Prostate gland (tissue), 2 donors: ENCODE measurements at regions of chr11 and their contacts with region 1.

Region 1: DNA sequence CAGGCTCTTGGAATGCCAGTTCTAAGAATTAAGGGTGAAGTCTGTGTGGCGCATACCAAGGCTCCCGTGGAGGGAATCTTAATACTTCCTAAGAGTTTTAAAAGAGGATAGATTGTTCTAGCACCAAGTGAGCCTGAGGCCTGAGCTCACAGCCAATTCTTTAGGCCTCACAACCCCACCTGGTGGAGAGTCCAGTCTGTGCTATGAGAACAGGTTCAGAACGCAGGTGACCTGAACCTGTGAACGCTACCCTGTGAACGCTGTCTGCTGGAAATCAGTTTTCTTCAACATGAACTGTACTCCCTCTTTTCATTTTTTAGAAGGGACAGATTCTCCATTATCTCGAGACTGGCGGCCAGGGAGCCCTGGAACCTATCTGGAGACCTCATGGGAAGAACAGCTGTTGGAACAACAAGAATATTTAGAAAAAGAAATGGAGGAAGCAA is 43.2 kb upstream of the DLAT start:
- DNase-seq: peak; percentile 87
- H3K4me3 ChIP-seq: peak overlapping the region; percentile 17 to 28
- H3K27ac ChIP-seq: peak overlapping the region; percentile 84 to 85
- H3K4me1 ChIP-seq: no peaks in the 10 kb centered on the region
- H3K27me3 ChIP-seq: no peaks in the 10 kb centered on the region
- CTCF ChIP-seq: peak; percentile 55 to 93 (median 84)
- POLR2A ChIP-seq: no peak

Region 2: GRCh38 chr11:111911563-111912401 is 70.3 kb before region 1 on chr11 and contains the start of gene CRYAB:
- intact Hi-C with region 1: loop called (anchors 2 kb)
- DNase-seq: peak; percentile 96
- H3K4me3 ChIP-seq: peak within 1 kb of the TSS; percentile 31 to 33
- H3K27ac ChIP-seq: peak within 1 kb of the TSS; percentile 92 to 95
- H3K4me1 ChIP-seq: peaks cover 15% of the 10 kb centered on the region
- H3K27me3 ChIP-seq: no peaks in the 10 kb centered on the region
- CTCF ChIP-seq: no peak
- POLR2A ChIP-seq: peak; percentile 57
- total RNA-seq, gene CRYAB: 59.0 to 80.1 TPM

Region 3: DNA sequence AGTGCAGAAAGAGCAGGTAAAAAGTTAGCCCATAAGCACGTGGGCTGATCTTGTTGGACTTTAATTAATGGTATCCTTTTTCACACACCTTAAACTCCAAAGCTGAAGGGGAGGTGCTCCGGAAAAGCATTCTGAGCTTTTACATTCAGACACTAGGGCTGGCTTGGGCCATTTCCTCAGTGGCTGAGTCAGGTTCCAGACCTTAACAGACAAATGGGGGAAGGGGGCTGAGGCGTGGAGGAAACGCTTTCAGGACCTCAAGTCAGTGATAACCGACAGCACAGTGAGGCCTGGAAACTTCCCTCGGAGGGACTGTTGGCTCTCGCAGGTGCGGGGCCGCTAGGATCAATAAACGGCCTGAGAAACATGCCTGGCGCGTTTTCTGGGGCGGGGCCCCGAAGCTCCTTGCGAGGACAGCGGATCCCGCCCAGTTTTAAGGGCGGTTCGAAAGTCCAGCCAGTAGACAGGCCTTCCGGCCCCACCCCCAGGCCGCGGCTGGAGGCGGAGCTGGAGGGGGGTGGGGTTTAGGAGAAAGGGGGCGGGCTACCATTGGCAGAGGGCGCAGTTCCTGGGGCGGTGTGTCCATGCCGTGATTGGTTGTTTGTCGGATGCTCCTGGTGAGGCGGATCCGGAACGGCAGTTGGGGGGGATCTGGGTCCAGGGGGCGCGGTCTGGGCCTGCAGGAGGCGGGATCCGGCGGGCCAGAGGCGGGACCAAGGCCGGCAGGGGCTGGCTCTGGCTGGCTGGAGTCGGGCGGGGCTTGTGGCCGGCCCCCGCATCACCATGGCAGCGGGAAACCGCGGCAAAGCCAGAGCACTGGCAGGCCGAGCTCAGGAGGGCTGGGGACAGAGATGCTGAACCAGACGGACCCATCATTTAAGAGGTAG is 55.3 kb before region 1 on chr11:
- intact Hi-C with region 1: loop called (anchors 2 kb)
- DNase-seq: peak; percentile 96
- H3K4me3 ChIP-seq: peak overlapping the region; percentile 15 to 22
- H3K27ac ChIP-seq: peak overlapping the region; percentile 89 to 97
- H3K4me1 ChIP-seq: peaks cover 8% of the 10 kb centered on the region
- H3K27me3 ChIP-seq: no peaks in the 10 kb centered on the region
- CTCF ChIP-seq: peak in 2 of 4 experiments; percentile 17 to 27
- POLR2A ChIP-seq: peak; percentile 79

Region 4: DNA sequence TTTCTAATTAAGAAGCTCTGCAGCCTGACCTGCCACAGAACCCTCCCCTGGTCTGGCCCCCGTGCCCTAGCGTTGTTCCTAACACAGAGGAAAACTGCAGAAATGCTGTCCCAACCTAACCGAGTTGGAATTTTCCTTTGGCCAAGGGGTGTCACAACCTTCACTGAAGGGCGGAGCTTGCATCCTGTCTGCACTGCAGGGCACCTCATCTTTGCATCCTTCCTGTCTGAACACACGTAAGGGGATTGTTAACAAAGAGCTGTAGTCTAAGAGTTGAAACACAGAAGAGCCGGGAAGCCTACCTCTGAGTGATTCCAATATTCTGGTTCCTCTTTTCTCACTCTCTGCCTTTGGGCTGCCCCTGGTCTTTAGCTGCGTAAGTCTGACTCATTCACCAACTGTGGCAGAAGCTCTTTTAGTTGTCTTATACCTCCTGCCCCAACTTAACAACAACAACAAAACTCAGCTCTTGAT is 43.3 kb before region 1 on chr11:
- intact Hi-C with region 1: loop called (anchors 2 kb)
- DNase-seq: no peak
- H3K4me3 ChIP-seq: no peak overlapping the region
- H3K27ac ChIP-seq: peak overlapping the region; percentile 18 to 71
- H3K4me1 ChIP-seq: no peaks in the 10 kb centered on the region
- H3K27me3 ChIP-seq: no peaks in the 10 kb centered on the region
- CTCF ChIP-seq: no peak
- POLR2A ChIP-seq: no peak

Region 5: DNA sequence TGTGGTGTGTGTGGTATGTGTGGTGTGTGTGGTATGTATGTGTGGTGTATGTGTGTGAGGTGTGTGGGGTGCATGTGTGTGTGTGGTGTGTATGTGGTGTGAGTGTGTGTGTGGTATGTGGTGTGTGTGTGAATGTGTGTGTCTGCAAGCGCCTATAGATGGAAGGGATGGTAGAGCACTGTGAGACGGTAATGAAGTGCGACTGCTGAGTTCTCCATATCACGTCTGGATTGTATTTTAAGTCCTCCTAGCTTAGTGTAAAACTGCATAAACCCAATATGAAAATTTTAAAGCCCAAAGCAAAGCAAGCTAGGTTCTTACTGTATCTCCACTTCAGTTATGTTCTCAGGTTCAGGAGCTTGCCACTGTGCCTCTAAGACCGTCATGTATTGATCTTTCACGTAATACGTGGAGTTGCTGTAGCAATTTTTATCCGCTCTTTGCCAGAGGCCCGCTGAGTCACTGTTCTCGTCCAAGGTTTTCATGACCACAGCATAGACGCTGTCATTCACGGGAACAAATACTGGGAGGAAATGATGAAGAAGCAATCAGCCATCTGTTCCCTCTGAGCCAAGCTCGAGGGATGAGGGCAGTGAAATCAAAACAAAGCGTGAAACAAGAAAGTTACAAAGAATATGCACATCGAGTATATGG is 273.2 kb after region 1 on chr11:
- intact Hi-C with region 1: no loop called
- DNase-seq: no peak
- H3K4me3 ChIP-seq: no peak overlapping the region
- H3K27ac ChIP-seq: no peak overlapping the region
- H3K4me1 ChIP-seq: no peaks in the 10 kb centered on the region
- H3K27me3 ChIP-seq: no peaks in the 10 kb centered on the region
- CTCF ChIP-seq: no peak
- POLR2A ChIP-seq: no peak